MCF 10A (cell line): ENCODE measurements at regions of chr21 and their contacts with region 1.

Region 1: GRCh38 chr21:40466893-40467501 is 380.0 kb downstream of the DSCAM start:
- DNase-seq: peak; percentile 17
- H3K4me3 Mint-ChIP-seq: no peak overlapping the region
- H3K27ac Mint-ChIP-seq: no peak overlapping the region
- H3K4me1 Mint-ChIP-seq: no peaks in the 10 kb centered on the region
- H3K27me3 Mint-ChIP-seq: no peaks in the 10 kb centered on the region
- CTCF ChIP-seq: peak; percentile 27

Region 2: GRCh38 chr21:40067751-40068150 is 399.2 kb before region 1 on chr21:
- CTCF ChIA-PET with region 1: no interaction called
- POLR2A ChIA-PET with region 1: no interaction called
- intact Hi-C with region 1: no loop called
- DNase-seq: no peak
- H3K4me3 Mint-ChIP-seq: no peak overlapping the region
- H3K27ac Mint-ChIP-seq: no peak overlapping the region
- H3K4me1 Mint-ChIP-seq: no peaks in the 10 kb centered on the region
- H3K27me3 Mint-ChIP-seq: peaks cover 46% of the 10 kb centered on the region
- CTCF ChIP-seq: no peak

Region 3: GRCh38 chr21:40393066-40393465 is 73.9 kb before region 1 on chr21:
- CTCF ChIA-PET with region 1: no interaction called
- POLR2A ChIA-PET with region 1: no interaction called
- intact Hi-C with region 1: no loop called
- DNase-seq: no peak
- H3K4me3 Mint-ChIP-seq: no peak overlapping the region
- H3K27ac Mint-ChIP-seq: no peak overlapping the region
- H3K4me1 Mint-ChIP-seq: no peaks in the 10 kb centered on the region
- H3K27me3 Mint-ChIP-seq: no peaks in the 10 kb centered on the region
- CTCF ChIP-seq: no peak

Region 4: GRCh38 chr21:40481764-40482163 is 14.8 kb after region 1 on chr21:
- CTCF ChIA-PET with region 1: interaction called, 17 read pairs
- POLR2A ChIA-PET with region 1: no interaction called
- intact Hi-C with region 1: no loop called
- DNase-seq: no peak
- H3K4me3 Mint-ChIP-seq: no peak overlapping the region
- H3K27ac Mint-ChIP-seq: no peak overlapping the region
- H3K4me1 Mint-ChIP-seq: no peaks in the 10 kb centered on the region
- H3K27me3 Mint-ChIP-seq: no peaks in the 10 kb centered on the region
- CTCF ChIP-seq: no peak

Region 5: DNA sequence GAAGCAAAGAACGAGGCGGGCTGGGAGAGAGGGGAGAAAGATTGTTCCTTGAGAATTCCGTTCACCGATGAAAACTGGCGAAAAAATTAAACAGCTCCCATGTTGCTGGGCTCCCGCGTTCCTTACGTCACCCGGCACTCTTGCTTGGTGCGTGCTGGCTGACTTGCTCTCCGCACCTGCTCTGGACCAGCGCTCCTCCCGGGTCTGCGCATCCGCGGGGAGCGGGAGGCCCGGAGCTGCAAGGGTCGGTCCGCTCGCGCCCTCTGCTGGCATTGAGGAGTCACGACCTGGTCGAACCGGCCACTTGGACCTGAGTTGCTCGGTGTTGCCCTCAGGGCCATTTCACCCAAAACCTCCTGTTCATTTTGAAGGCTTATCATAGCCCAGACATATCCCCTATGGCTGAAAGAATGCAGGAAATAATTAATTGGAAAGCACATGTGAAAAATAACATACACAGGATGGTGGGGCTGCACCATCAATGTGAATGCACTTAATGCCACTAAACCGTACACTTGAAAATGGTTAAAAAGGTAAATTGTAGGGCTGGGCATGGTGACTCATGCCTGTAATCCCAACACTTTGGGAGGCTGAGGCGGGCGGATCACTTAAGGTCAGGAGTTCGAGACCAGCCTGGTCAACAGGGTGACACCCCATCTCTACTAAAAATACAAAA is 602.1 kb after region 1 on chr21:
- CTCF ChIA-PET with region 1: interaction called, 29 read pairs
- POLR2A ChIA-PET with region 1: interaction called, 4 read pairs
- intact Hi-C with region 1: loop called (anchors 1 kb)
- DNase-seq: peak; percentile 62
- H3K4me3 Mint-ChIP-seq: peak overlapping the region; percentile 58
- H3K27ac Mint-ChIP-seq: no peak overlapping the region
- H3K4me1 Mint-ChIP-seq: peaks cover 5% of the 10 kb centered on the region
- H3K27me3 Mint-ChIP-seq: no peaks in the 10 kb centered on the region
- CTCF ChIP-seq: peak; percentile 77